Esophagus squamous epithelium (tissue), 5 donors: ENCODE measurements at regions of chr1 and their contacts with region 1.

Region 1: DNA sequence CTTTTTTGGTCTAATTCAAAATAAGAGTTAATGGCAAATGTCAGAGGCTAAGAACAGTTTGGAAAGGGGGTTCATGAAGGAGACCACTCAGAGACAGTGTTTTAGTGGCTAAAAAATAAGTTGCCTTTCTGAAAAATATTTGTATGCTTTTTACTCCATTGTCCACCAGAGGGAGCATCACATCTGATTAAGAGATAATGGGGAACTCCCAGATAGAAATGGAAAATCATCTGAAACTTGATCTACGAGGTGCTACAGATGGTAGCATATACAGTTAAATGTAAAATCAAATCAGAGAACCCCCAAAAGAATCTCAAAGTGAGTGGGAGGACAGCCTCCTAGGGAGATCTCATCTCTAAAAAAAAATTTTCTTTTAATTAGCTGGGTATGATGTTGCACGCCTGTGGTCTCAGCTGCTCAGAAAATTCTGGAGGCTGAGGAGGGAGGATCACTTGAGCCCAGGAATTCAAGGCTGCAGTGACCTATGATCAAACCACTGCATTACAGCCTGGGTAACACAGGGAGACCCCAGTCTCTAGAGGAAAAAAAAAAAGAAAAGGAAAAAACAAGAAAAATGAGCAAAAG is 9.7 kb downstream of the SMYD3 start:
- DNase-seq: no peak
- H3K4me3 ChIP-seq: no peak overlapping the region
- H3K27ac ChIP-seq: no peak overlapping the region
- H3K4me1 ChIP-seq: no peaks in the 10 kb centered on the region
- H3K27me3 ChIP-seq: no peaks in the 10 kb centered on the region
- CTCF ChIP-seq: peak; percentile 48 to 88 (median 67)
- POLR2A ChIP-seq: no peak

Region 2: DNA sequence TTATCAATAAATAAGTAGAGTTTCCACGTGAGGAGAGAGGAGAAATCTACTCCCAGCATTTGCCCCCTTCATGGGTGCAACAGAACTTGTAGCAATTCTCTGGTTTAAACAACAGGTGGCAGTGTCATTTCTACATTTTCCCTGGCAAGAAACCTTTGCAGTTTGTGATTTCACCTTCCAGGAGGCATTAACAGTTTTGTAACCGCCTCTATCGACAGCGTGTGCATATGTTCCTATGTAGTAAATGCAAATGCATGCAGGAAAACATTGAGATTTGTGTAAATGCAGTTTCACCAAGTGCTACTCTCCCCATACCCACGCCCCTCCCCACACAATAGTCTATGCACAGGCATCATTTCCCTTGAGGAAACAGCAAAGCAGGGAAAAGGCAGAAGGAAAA is 485.1 kb before region 1 on chr1:
- intact Hi-C with region 1: loop called (anchors 10 kb)
- DNase-seq: no peak
- H3K4me3 ChIP-seq: no peak overlapping the region
- H3K27ac ChIP-seq: no peak overlapping the region
- H3K4me1 ChIP-seq: peaks cover 0 to 17% (median 0%) of the 10 kb centered on the region in 3 donors
- H3K27me3 ChIP-seq: no peaks in the 10 kb centered on the region
- CTCF ChIP-seq: peak in 5 of 6 experiments; percentile 47 to 64 (median 50)
- POLR2A ChIP-seq: no peak

Region 3: GRCh38 chr1:246117066-246117791 is 380.2 kb before region 1 on chr1:
- intact Hi-C with region 1: no loop called
- DNase-seq: no peak
- H3K4me3 ChIP-seq: no peak overlapping the region
- H3K27ac ChIP-seq: no peak overlapping the region
- H3K4me1 ChIP-seq: peaks cover 0 to 4% (median 0%) of the 10 kb centered on the region in 3 donors
- H3K27me3 ChIP-seq: no peaks in the 10 kb centered on the region
- CTCF ChIP-seq: peak in 3 of 6 experiments; percentile 20 to 28 (median 21)
- POLR2A ChIP-seq: no peak

Region 4: GRCh38 chr1:246651012-246651695 is 153.7 kb after region 1 on chr1:
- intact Hi-C with region 1: no loop called
- DNase-seq: no peak
- H3K4me3 ChIP-seq: no peak overlapping the region
- H3K27ac ChIP-seq: no peak overlapping the region
- H3K4me1 ChIP-seq: peaks cover 0 to 23% (median 0%) of the 10 kb centered on the region in 3 donors
- H3K27me3 ChIP-seq: no peaks in the 10 kb centered on the region
- CTCF ChIP-seq: no peak
- POLR2A ChIP-seq: no peak

Region 5: GRCh38 chr1:246699095-246699735 is 201.8 kb after region 1 on chr1:
- intact Hi-C with region 1: loop called (anchors 5 kb)
- DNase-seq: peak; percentile 44
- H3K4me3 ChIP-seq: peak overlapping the region in 3 of 4 donors; percentile 26 to 61 (median 30)
- H3K27ac ChIP-seq: peak overlapping the region in 3 of 4 donors; percentile 24 to 61 (median 52)
- H3K4me1 ChIP-seq: peaks cover 0 to 27% (median 5%) of the 10 kb centered on the region in 3 donors
- H3K27me3 ChIP-seq: no peaks in the 10 kb centered on the region
- CTCF ChIP-seq: peak; percentile 61 to 83 (median 79)
- POLR2A ChIP-seq: no peak

Region 6: DNA sequence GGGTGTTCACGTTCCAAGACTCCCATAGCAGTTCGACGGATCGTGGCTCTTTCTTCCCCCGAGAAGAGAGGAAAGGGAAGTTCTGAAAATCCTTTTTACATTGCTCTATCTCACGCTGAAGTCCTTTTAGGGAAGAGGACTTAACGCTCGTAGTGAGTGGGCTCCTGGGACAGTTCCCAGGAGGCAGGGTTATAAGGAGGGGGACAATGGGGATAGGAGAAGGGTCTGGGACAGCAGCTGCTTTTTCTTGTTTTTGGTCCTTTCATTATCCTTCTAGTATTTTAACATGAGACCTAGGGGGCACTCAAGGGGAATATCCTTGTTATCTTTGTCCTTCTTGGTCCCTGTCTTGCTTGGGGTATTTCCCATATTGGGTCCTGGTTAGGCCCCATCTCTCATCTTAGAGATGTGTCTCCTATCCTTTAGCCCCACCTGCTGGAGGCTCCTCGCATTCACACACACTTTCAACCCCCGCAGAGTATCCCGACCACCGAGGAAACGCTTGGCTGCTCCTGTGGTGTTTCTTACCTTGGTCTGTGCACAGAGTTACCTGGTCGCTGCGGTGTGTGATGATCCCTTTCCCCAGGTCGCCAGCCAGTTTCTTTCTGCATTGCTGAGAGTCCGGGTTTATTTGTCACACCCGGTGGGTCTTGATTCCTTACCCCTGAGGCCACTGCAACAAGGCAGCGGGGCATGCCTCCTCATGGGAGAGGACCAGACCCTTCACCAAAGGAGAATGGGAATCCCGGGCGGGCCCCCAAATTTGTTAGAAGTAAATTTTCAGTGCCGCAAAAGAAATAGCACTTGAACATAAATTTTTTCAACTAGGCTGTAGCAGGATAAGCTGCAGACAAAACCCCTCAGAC is 256.5 kb after region 1 on chr1:
- intact Hi-C with region 1: loop called (anchors 5 kb)
- DNase-seq: no peak
- H3K4me3 ChIP-seq: no peak overlapping the region
- H3K27ac ChIP-seq: no peak overlapping the region
- H3K4me1 ChIP-seq: no peaks in the 10 kb centered on the region
- H3K27me3 ChIP-seq: no peaks in the 10 kb centered on the region
- CTCF ChIP-seq: peak; percentile 57 to 81 (median 68)
- POLR2A ChIP-seq: no peak